Activated CD8-positive, alpha-beta T cell treated with anti-CD3 and anti-CD28 coated beads, Interleukin-2, amount 10 ng/mL, durations not matched to agents 7 days and 5 days (primary cell): ENCODE measurements at regions of chr19 and their contacts with region 1.

Region 1: GRCh38 chr19:18388100-18388959 is 2.4 kb downstream of the GDF15 start:
- DNase-seq: peak; percentile 83
- ATAC-seq: peak; percentile 90
- H3K4me3 Mint-ChIP-seq: peak overlapping the region; percentile 58
- H3K27ac Mint-ChIP-seq: no peak overlapping the region
- H3K4me1 Mint-ChIP-seq: peaks cover 18% of the 10 kb centered on the region
- H3K27me3 Mint-ChIP-seq: peaks cover 46% of the 10 kb centered on the region

Region 2: DNA sequence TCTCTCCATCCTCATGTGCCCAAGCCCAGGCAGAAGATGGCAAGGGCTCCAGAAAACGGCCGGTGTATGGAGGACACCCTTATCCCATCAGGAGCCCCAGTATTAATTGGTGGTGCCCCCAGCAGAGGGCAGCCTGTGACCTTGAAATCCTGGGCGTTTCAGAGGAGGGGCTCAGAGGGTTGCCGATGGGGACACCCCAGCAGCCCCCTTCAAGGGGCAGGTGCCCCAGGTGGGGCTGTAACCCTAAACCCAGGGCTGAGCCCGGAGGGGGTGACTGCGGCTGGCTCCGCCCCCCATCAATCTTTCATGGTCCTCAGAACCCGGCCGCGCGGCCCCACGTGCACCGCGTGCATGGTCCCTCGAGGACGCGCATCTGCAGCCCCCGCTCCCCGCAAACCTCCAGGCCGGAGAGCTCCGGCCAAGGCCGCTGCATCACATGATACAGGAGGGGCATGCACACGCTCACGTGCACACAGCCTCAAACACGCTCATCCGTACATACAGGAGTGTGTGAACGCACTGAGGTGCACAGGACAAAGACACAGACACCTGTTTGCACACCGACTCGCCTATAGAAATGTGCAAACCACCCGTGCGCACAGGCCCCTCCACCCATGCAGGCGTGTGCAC is 185.4 kb before region 1 on chr19:
- CTCF ChIA-PET with region 1: no interaction called
- POLR2A ChIA-PET with region 1: no interaction called
- DNase-seq: peak; percentile 39
- ATAC-seq: no peak
- H3K4me3 Mint-ChIP-seq: peak overlapping the region; percentile 95
- H3K27ac Mint-ChIP-seq: peak overlapping the region; percentile 91
- H3K4me1 Mint-ChIP-seq: peaks cover 28% of the 10 kb centered on the region
- H3K27me3 Mint-ChIP-seq: peaks cover 3% of the 10 kb centered on the region

Region 3: GRCh38 chr19:18349524-18350128 is 38.7 kb before region 1 on chr19:
- CTCF ChIA-PET with region 1: interaction called, 17 read pairs
- POLR2A ChIA-PET with region 1: no interaction called
- DNase-seq: peak; percentile 58
- ATAC-seq: no peak
- H3K4me3 Mint-ChIP-seq: no peak overlapping the region
- H3K27ac Mint-ChIP-seq: no peak overlapping the region
- H3K4me1 Mint-ChIP-seq: peaks cover 6% of the 10 kb centered on the region
- H3K27me3 Mint-ChIP-seq: no peaks in the 10 kb centered on the region

Region 4: DNA sequence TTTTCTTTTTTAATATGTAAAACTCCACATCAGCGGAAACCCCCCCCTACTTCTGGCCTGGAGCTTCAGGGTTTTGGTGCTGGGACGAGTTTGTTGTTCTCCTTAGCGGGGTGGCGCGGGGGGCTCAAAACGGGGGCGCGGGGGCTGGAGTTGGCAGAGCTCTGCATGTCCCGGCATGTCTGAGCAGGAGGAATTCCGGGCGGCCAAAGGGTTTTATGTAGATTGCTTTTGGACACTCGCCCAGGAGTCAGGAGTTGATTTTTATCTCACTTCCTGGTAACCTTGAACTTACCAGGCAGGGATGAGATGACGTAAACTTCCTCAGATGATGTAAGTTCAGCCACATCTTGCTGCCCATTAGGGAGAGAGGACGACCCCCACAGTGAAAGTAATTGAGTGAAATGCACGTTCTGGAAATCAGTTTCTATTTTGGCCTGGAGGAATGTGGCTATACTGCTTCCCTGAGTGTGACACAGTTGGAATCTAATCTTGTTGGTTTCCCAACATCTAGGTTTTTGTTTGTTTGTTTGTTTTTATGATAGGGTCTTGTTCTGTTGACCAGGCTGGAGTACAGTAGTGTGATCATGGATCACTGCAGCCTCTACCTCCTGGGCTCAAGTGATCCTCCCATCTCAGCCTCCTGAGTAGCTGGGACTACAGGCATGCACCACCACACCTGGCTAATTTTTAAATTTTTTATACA is 23.4 kb before region 1 on chr19:
- CTCF ChIA-PET with region 1: interaction called, 19 read pairs
- POLR2A ChIA-PET with region 1: interaction called, 3 read pairs
- DNase-seq: no peak
- ATAC-seq: no peak
- H3K4me3 Mint-ChIP-seq: no peak overlapping the region
- H3K27ac Mint-ChIP-seq: peak overlapping the region; percentile 71
- H3K4me1 Mint-ChIP-seq: peaks cover 18% of the 10 kb centered on the region
- H3K27me3 Mint-ChIP-seq: no peaks in the 10 kb centered on the region

Region 5: DNA sequence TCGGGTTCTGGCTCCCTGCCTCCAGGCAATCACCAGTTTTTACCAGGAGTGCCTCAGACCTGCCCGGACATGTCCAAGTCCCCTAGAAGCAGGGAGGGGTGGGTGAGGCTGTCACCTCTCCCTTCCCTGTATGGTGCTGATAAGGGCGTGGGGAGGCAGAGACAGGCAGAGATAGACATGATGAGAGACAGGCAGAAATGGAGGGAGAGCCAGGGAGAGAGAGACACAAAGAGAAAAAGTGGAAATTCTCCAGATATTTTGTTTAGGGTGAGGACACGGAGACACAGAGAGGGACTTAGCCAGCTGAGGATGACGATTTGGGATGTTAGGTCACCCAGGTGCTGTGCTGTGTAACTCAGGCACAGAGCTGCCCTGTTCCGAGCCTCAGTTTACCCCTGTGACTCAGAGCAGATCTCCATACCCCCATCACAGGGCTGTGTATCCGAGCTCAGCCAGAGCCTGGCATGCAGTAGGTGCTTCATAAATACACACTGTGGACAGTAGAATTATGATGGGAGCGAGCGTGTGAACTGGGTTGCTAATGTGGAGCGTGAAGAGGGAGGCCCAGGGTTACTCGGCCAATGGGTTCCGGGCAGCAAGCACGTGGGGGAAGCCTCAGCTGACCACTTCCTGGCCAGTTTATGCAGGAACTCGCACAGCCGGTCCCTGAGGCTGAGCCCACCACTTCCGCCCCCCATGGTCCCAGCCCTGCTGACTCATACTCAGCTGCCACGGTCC is 14.3 kb before region 1 on chr19:
- CTCF ChIA-PET with region 1: interaction called, 17 read pairs
- POLR2A ChIA-PET with region 1: no interaction called
- DNase-seq: peak; percentile 87
- ATAC-seq: peak; percentile 88
- H3K4me3 Mint-ChIP-seq: no peak overlapping the region
- H3K27ac Mint-ChIP-seq: peak overlapping the region; percentile 82
- H3K4me1 Mint-ChIP-seq: peaks cover 16% of the 10 kb centered on the region
- H3K27me3 Mint-ChIP-seq: no peaks in the 10 kb centered on the region

Region 6: GRCh38 chr19:18401580-18402112 is 13.3 kb after region 1 on chr19:
- CTCF ChIA-PET with region 1: interaction called, 18 read pairs
- POLR2A ChIA-PET with region 1: no interaction called
- DNase-seq: no peak
- ATAC-seq: no peak
- H3K4me3 Mint-ChIP-seq: no peak overlapping the region
- H3K27ac Mint-ChIP-seq: peak overlapping the region; percentile 73
- H3K4me1 Mint-ChIP-seq: peaks cover 26% of the 10 kb centered on the region
- H3K27me3 Mint-ChIP-seq: peaks cover 11% of the 10 kb centered on the region

Region 7: DNA sequence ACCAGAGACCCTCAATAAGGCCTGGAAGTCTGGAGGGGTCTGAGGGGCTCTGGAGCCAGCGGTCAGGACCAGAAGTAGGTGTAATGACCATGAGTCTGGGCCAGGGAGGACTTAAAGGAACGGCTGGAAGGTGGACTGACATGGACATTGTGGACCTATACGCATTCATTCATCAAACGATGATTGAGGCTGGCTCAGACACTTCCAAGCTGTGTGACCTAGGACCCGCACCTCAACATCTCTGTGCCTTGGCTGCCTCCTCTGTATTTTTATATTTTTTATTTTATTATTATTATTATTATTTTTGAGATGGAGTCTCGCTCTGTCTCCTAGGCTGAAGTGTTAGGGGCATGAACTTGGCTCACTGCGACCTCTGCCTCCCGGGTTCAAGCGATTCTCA is 18.4 kb after region 1 on chr19:
- CTCF ChIA-PET with region 1: interaction called, 122 read pairs
- POLR2A ChIA-PET with region 1: interaction called, 3 read pairs
- DNase-seq: no peak
- ATAC-seq: no peak
- H3K4me3 Mint-ChIP-seq: no peak overlapping the region
- H3K27ac Mint-ChIP-seq: no peak overlapping the region
- H3K4me1 Mint-ChIP-seq: peaks cover 11% of the 10 kb centered on the region
- H3K27me3 Mint-ChIP-seq: peaks cover 3% of the 10 kb centered on the region

Region 8: DNA sequence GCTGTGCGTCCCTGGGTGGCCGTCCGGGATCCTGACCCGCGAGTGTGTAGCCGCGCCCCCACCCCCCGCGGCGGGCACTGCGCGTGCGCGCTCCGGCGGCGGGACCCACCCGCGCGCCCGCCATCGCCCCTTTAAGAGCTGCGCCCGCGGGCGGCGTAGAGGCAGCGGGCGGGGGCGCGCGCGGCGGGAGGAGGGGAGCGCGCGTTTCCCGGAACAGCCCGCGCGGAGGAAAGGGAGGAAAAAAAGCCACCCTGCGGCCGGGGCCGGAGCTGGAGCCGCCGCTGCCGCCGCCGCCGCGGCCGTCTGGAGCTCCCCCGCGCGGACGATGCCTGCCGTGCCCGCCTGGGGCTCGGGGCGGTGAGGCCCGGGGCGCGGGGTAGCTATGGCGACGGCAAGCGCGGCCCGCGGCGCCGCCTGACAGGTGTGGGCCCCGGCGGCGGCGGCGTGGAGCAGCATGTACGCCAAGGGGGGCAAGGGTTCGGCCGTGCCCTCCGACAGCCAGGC is 30.9 kb after region 1 on chr19 and contains the start of gene SSBP4:
- CTCF ChIA-PET with region 1: interaction called, 122 read pairs
- POLR2A ChIA-PET with region 1: interaction called, 5 read pairs
- DNase-seq: peak; percentile 76
- ATAC-seq: peak; percentile 42
- H3K4me3 Mint-ChIP-seq: peak within 1 kb of the TSS; percentile 93
- H3K27ac Mint-ChIP-seq: peak within 1 kb of the TSS; percentile 94
- H3K4me1 Mint-ChIP-seq: peaks cover 83% of the 10 kb centered on the region
- H3K27me3 Mint-ChIP-seq: no peaks in the 10 kb centered on the region
- total RNA-seq, gene SSBP4: 198 to 204 TPM